Aorta (tissue), 5 donors: ENCODE measurements at regions of chr10 and their contacts with region 1.

Region 1: DNA sequence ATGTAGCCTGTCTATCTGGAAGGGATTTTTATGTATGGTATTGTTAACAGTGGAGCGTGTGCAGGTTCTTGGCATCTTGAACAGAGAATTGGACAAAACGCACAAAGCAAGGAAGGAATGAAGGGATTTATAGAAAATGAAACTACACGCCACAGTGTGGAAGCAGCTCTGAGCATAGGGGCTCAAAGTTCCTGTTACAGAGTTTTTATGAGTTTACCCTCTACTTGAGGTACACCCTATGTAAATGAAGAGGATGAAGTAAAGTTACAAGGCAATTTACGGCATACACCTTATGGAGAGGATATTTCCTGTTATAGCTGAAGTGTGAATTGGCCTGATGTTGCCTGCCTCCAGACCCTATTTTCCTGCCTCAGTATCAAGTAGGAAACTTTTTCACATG is 33.3 kb downstream of the FANK1 start:
- DNase-seq: no peak
- ATAC-seq: no peak
- H3K4me3 ChIP-seq: no peak overlapping the region
- H3K27ac ChIP-seq: no peak overlapping the region
- H3K4me1 ChIP-seq: no peaks in the 10 kb centered on the region
- H3K27me3 ChIP-seq: no peaks in the 10 kb centered on the region

Region 2: GRCh38 chr10:125976960-125977603 is 47.5 kb after region 1 on chr10:
- intact Hi-C with region 1: no loop called
- DNase-seq: no peak
- ATAC-seq: no peak
- H3K4me3 ChIP-seq: no peak overlapping the region
- H3K27ac ChIP-seq: no peak overlapping the region
- H3K4me1 ChIP-seq: no peaks in the 10 kb centered on the region
- H3K27me3 ChIP-seq: no peaks in the 10 kb centered on the region

Region 3: GRCh38 chr10:126062131-126062981 is 132.7 kb after region 1 on chr10:
- intact Hi-C with region 1: no loop called
- DNase-seq: peak; percentile 96 to 97
- ATAC-seq: peak; percentile 87
- H3K4me3 ChIP-seq: no peak overlapping the region
- H3K27ac ChIP-seq: peak overlapping the region in 1 of 2 donors; percentile 82
- H3K4me1 ChIP-seq: peaks cover 0 to 3% of the 10 kb centered on the region in 2 donors
- H3K27me3 ChIP-seq: no peaks in the 10 kb centered on the region

Region 4: GRCh38 chr10:126504063-126504739 is 574.6 kb after region 1 on chr10:
- intact Hi-C with region 1: loop called in 1 of 2 experiments (anchors 5 kb)
- DNase-seq: no peak
- ATAC-seq: no peak
- H3K4me3 ChIP-seq: no peak overlapping the region
- H3K27ac ChIP-seq: no peak overlapping the region
- H3K4me1 ChIP-seq: no peaks in the 10 kb centered on the region
- H3K27me3 ChIP-seq: no peaks in the 10 kb centered on the region